Posterior cingulate gyrus (tissue), 11 donors: ENCODE measurements at regions of chr13 and their contacts with region 1.

Region 1: DNA sequence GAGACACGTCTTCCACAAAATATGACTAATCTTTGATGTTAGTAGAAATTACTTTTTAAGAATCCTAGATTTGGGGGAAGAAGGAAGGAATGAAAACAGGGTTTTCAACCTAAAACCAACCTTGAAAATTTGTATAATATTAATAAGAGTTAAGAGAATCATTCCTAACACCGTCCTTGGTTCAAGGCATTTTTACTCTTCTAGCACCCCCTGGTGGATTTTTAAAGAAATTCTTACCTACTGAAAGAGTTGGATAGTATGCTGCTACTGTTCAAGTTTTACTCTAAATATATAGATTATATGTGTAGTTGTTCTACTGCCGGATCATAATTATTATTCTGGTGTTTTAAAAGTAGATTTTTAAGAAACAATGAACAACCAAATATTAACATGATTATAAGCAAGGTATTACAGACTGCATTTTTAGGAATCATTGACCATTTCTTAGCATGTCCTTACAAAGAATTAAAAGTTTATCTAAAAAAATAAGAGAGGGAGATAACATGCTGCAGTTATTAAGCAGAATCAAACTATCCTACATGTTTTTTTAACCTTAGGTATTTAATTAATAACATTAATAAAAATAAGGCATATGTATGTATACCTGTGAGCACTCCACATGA is 7.4 kb upstream of the SLITRK6 start:
- DNase-seq: no peak

Region 2: GRCh38 chr13:84896128-84896527 is 910.5 kb before region 1 on chr13:
- intact Hi-C with region 1: loop called (anchors 1 kb)
- DNase-seq: peak in 4 of 10 donors; percentile 39 to 50 (median 49)

Region 3: DNA sequence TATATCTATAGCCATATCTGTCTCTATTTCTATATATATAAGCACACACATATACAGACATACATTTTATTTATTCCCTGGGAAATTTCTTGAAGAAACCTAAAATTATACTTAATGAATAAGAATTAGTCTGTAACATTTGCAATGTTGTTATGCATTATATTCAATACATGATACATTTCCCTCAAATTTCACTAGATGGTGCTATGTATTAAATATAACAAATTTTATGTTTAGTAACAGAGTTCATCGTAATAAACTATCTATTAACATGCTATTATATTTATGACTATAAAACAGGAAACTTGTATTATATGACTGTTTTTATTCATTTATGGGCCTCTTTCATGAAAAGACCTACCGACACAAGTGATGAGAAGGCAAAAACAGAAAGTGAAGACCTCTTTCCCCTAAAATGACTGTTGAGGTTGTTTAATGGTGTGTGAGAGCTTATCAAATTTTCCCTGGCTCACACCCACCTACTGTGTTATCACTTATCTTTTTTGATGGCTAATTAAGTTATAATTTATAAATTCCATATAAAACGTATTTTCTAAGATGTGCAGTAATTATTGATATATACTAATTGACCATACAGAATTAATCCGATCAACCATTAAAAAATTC is 889.3 kb before region 1 on chr13:
- intact Hi-C with region 1: loop called (anchors 1 kb)
- DNase-seq: no peak

Region 4: GRCh38 chr13:85737952-85738351 is 68.7 kb before region 1 on chr13:
- intact Hi-C with region 1: no loop called
- DNase-seq: no peak

Region 5: DNA sequence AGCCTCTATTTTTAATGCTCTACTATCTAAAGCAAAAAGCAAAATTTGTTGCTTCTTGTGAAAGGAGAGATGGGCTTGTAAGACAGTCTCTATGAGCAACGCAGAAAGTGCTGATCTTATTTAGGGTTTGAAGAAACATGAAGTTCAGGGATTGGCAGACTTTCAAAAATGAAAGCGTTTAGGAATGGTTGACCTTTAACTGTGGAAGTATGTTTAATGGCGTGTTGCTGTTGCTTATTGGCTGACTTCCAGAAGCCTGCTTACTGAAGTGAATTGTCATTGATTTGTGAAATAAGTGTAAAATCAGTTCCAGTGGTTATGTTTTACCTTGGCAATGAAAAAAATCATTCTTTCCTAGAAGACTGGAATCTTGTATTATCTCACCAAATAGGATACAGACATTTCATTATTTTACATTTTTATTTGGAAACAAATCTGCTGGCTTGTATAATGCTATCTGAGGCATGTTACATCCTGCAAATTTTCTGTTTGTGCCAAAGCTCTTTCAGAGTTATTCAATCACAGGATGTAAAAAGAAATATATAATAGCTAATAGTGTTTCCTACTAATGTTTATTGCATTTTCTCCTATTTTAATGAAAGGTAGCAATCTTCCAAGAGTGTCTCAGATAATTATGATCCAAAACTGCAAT is 213.8 kb after region 1 on chr13:
- intact Hi-C with region 1: no loop called
- DNase-seq: no peak